PC-9 (cell line): ENCODE measurements at regions of chrX and their contacts with region 1.

Region 1: DNA sequence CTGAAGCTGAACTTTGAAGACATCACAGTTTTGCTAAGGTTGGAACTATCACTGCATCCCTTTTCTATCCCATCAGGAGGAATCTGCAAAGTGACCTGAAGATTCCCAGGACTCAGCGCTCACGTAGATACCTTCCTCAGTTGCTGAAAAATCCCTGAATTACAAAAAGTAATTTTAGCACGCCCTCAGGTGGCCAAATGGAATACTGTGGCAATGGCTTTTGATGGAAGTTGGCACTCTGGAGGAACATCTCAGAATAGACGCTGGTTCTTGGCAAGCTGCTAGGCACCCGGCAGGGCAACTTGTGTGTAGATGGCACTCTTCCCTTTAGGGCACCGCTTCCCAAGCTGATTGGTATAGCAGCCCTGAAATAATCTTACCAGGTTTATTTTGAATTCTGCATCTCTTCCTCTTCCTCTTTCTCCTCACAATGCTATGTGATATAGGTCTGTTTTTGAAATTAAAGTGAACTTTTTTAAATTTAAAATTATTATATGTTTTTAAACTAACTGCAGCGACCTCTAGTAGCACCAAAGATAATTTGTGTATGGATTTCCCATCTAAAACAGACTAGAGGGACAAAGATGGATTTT is 16.3 kb upstream of the ESX1 start:
- DNase-seq: peak; percentile 47 to 57
- H3K4me3 ChIP-seq: no peak overlapping the region
- H3K27ac ChIP-seq: no peak overlapping the region
- H3K4me1 ChIP-seq: no peaks in the 10 kb centered on the region
- H3K27me3 ChIP-seq: no peaks in the 10 kb centered on the region
- CTCF ChIP-seq: peak; percentile 79

Region 2: GRCh38 chrX:104195489-104196084 is 75.4 kb before region 1 on chrX:
- CTCF ChIA-PET with region 1: no interaction called
- POLR2A ChIA-PET with region 1: interaction called, 3 read pairs
- intact Hi-C with region 1: loop called (anchors 1 kb)
- DNase-seq: peak in 1 of 2 experiments; percentile 39
- H3K4me3 ChIP-seq: no peak overlapping the region
- H3K27ac ChIP-seq: no peak overlapping the region
- H3K4me1 ChIP-seq: no peaks in the 10 kb centered on the region
- H3K27me3 ChIP-seq: no peaks in the 10 kb centered on the region
- CTCF ChIP-seq: peak; percentile 80

Region 3: GRCh38 chrX:104284507-104284906 is 13.5 kb after region 1 on chrX:
- CTCF ChIA-PET with region 1: interaction called, 12 read pairs
- POLR2A ChIA-PET with region 1: no interaction called
- intact Hi-C with region 1: no loop called
- DNase-seq: no peak
- H3K4me3 ChIP-seq: no peak overlapping the region
- H3K27ac ChIP-seq: no peak overlapping the region
- H3K4me1 ChIP-seq: no peaks in the 10 kb centered on the region
- H3K27me3 ChIP-seq: no peaks in the 10 kb centered on the region
- CTCF ChIP-seq: no peak

Region 4: GRCh38 chrX:104343428-104344129 is 72.6 kb after region 1 on chrX:
- CTCF ChIA-PET with region 1: no interaction called
- POLR2A ChIA-PET with region 1: no interaction called
- intact Hi-C with region 1: loop called (anchors 10 kb)
- DNase-seq: peak; percentile 53 to 81
- H3K4me3 ChIP-seq: no peak overlapping the region
- H3K27ac ChIP-seq: peak overlapping the region; percentile 16; the same call in 1 of the 2 replicates
- H3K4me1 ChIP-seq: peaks cover 8% of the 10 kb centered on the region; the same call in 1 of the 2 replicates
- H3K27me3 ChIP-seq: no peaks in the 10 kb centered on the region
- CTCF ChIP-seq: peak; percentile 70

Region 5: GRCh38 chrX:104668550-104668949 is 397.5 kb after region 1 on chrX:
- CTCF ChIA-PET with region 1: no interaction called
- POLR2A ChIA-PET with region 1: no interaction called
- intact Hi-C with region 1: no loop called
- DNase-seq: no peak
- H3K4me3 ChIP-seq: no peak overlapping the region
- H3K27ac ChIP-seq: no peak overlapping the region
- H3K4me1 ChIP-seq: no peaks in the 10 kb centered on the region
- H3K27me3 ChIP-seq: no peaks in the 10 kb centered on the region
- CTCF ChIP-seq: peak; percentile 50; the same call in 1 of the 2 replicates